ENCODE measurements at regions of chr6 and their contacts with region 1.

Region 1: GRCh38 chr6:32843979-32844838 is at the start of gene PSMB8:
- DNase-seq: peak; percentile 97 to 100 (median 98)
- H3K4me3 ChIP-seq: peak within 1 kb of the TSS; percentile 89 to 98
- H3K4me3 Mint-ChIP-seq: peak within 1 kb of the TSS; percentile 94 to 100 (median 97)
- H3K27ac ChIP-seq: peak within 1 kb of the TSS; percentile 99
- H3K27ac Mint-ChIP-seq: peak within 1 kb of the TSS; percentile 99 to 100 (median 99)
- H3K4me1 ChIP-seq: peaks cover 81% of the 10 kb centered on the region
- H3K4me1 Mint-ChIP-seq: peaks cover 61 to 98% (median 72%) of the 10 kb centered on the region in 4 donors
- H3K27me3 ChIP-seq: no peaks in the 10 kb centered on the region
- H3K27me3 Mint-ChIP-seq: no peaks in the 10 kb centered on the region
- total RNA-seq, gene PSMB8: 134 to 138 TPM

Region 2: GRCh38 chr6:32622545-32623401 is 221.4 kb before region 1 on chr6:
- CTCF ChIA-PET with region 1: no interaction called
- POLR2A ChIA-PET with region 1: interaction called, 10 read pairs
- intact Hi-C with region 1: no loop called
- DNase-seq: peak; percentile 71 to 90 (median 86)
- H3K4me3 ChIP-seq: peak overlapping the region in 1 of 2 donors; percentile 30
- H3K4me3 Mint-ChIP-seq: peak overlapping the region; percentile 28 to 75 (median 71)
- H3K27ac ChIP-seq: peak overlapping the region; percentile 85
- H3K27ac Mint-ChIP-seq: peak overlapping the region; percentile 82 to 99 (median 95)
- H3K4me1 ChIP-seq: peaks cover 53% of the 10 kb centered on the region
- H3K4me1 Mint-ChIP-seq: peaks cover 37 to 68% (median 44%) of the 10 kb centered on the region in 4 donors
- H3K27me3 ChIP-seq: no peaks in the 10 kb centered on the region
- H3K27me3 Mint-ChIP-seq: no peaks in the 10 kb centered on the region

Region 3: DNA sequence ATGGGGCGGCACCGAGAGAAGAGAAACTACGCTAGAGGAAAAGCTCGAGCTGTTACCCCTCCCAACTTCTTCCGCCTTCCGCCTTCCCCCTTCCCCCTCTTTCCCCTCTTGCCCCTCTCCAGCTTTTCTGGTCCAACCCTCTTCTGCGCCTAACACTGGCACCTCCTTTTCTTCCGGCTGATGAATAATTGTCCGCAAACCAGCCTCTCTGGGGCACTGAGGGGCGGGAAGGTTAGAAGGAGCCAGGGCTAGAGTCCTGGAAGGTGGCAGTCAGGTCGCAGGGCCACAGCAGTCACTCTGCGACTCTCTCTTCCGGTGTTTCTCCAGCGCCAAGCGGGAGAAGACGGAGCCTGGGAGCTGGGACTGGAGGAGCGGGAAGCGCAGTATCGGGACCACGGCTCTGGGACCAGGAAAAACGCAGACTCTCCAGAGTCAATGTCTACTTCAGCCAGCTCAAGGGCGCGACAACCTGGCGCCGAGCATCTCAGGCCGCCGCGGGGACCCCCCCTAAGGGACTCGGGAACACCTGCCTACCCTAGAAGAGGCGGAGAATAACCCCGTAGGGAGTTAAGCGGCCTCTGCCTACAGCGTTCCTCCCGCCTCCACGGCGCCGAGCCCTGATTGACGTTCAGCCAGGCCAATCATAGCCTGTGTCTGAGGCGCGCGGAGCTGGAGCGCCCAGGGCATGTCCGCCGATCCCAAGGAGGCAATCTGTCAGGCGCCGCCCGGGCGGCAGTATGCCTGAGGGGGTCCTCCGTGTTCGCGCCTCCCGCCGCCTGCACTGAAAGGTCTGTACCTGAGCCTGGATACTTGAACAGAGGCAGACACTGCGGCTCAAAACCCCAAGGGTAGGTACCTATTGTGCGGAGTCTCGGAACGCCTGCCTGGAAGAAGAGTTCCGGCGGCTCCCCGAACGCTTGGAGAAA is 50.1 kb after region 1 on chr6:
- CTCF ChIA-PET with region 1: no interaction called
- POLR2A ChIA-PET with region 1: interaction called, 25 read pairs
- intact Hi-C with region 1: loop called (anchors 2 kb)
- DNase-seq: peak; percentile 91 to 97 (median 91)
- H3K4me3 ChIP-seq: peak overlapping the region; percentile 78 to 90
- H3K4me3 Mint-ChIP-seq: peak overlapping the region; percentile 99 to 100 (median 100)
- H3K27ac ChIP-seq: peak overlapping the region; percentile 84
- H3K27ac Mint-ChIP-seq: peak overlapping the region; percentile 93 to 99 (median 98)
- H3K4me1 ChIP-seq: peaks cover 21% of the 10 kb centered on the region
- H3K4me1 Mint-ChIP-seq: peaks cover 14 to 45% (median 26%) of the 10 kb centered on the region in 4 donors
- H3K27me3 ChIP-seq: no peaks in the 10 kb centered on the region
- H3K27me3 Mint-ChIP-seq: no peaks in the 10 kb centered on the region

Region 4: DNA sequence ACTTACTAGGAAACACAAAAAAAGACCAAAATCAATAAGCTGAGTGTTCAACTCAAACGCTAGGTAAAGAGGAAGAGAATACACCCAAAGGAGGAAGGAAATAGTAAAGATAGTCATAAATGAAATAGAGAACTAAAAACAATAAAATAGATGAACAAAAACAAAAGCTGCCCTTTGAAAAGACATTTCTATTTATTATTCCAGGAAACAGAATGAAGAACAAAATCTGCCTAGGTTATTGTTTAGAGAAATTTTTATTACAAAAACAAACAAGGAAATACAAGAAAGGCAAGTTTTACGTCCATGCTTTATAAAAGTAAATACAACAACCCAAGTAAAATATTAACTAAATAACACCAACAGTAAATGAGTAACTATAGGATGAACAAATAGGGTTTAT is 76.5 kb after region 1 on chr6:
- CTCF ChIA-PET with region 1: no interaction called
- POLR2A ChIA-PET with region 1: no interaction called
- intact Hi-C with region 1: no loop called
- DNase-seq: no peak
- H3K4me3 ChIP-seq: no peak overlapping the region
- H3K4me3 Mint-ChIP-seq: no peak overlapping the region
- H3K27ac ChIP-seq: no peak overlapping the region
- H3K27ac Mint-ChIP-seq: no peak overlapping the region
- H3K4me1 ChIP-seq: no peaks in the 10 kb centered on the region
- H3K4me1 Mint-ChIP-seq: peaks cover 0 to 5% (median under 1%) of the 10 kb centered on the region in 4 donors
- H3K27me3 ChIP-seq: no peaks in the 10 kb centered on the region
- H3K27me3 Mint-ChIP-seq: peaks cover 2 to 6% of the 10 kb centered on the region in 2 donors

Region 5: GRCh38 chr6:32952817-32953739 is 108.9 kb after region 1 on chr6 and contains the start of gene HLA-DMA:
- CTCF ChIA-PET with region 1: interaction called, 31 read pairs
- POLR2A ChIA-PET with region 1: interaction called, 14 read pairs
- intact Hi-C with region 1: no loop called
- DNase-seq: peak; percentile 76 to 90 (median 85)
- H3K4me3 ChIP-seq: peak within 1 kb of the TSS; percentile 7 to 19
- H3K4me3 Mint-ChIP-seq: peak within 1 kb of the TSS; percentile 18 to 80 (median 68)
- H3K27ac ChIP-seq: peak within 1 kb of the TSS; percentile 31
- H3K27ac Mint-ChIP-seq: peak within 1 kb of the TSS; percentile 49 to 89 (median 82)
- H3K4me1 ChIP-seq: peaks cover 27% of the 10 kb centered on the region
- H3K4me1 Mint-ChIP-seq: peaks cover 24 to 44% (median 34%) of the 10 kb centered on the region in 4 donors
- H3K27me3 ChIP-seq: no peaks in the 10 kb centered on the region
- H3K27me3 Mint-ChIP-seq: no peaks in the 10 kb centered on the region
- total RNA-seq, gene HLA-DMA: 8.5 to 10.2 TPM

Region 6: GRCh38 chr6:33579828-33580714 is 735.9 kb after region 1 on chr6 and contains the start of gene BAK1:
- CTCF ChIA-PET with region 1: no interaction called
- POLR2A ChIA-PET with region 1: no interaction called
- intact Hi-C with region 1: no loop called
- DNase-seq: peak; percentile 78 to 89 (median 79)
- H3K4me3 ChIP-seq: peak within 1 kb of the TSS; percentile 88 to 98
- H3K4me3 Mint-ChIP-seq: peak within 1 kb of the TSS; percentile 93 to 100 (median 98)
- H3K27ac ChIP-seq: peak within 1 kb of the TSS; percentile 90
- H3K27ac Mint-ChIP-seq: peak within 1 kb of the TSS; percentile 98 to 100 (median 99)
- H3K4me1 ChIP-seq: peaks cover 31% of the 10 kb centered on the region
- H3K4me1 Mint-ChIP-seq: peaks cover 14 to 58% (median 32%) of the 10 kb centered on the region in 4 donors
- H3K27me3 ChIP-seq: no peaks in the 10 kb centered on the region
- H3K27me3 Mint-ChIP-seq: no peaks in the 10 kb centered on the region
- total RNA-seq, gene BAK1: 26.2 to 27.2 TPM

Measured in CD4-positive, alpha-beta memory T cell (primary cell).